Caco-2 (cell line): ENCODE measurements at regions of chr16 and their contacts with region 1.

Region 1: GRCh38 chr16:85554112-85554813 is 58.9 kb upstream of the GSE1 start:
- DNase-seq: peak; percentile 51 to 62
- H3K4me3 ChIP-seq: peak overlapping the region; percentile 76
- H3K4me3 Mint-ChIP-seq: peak overlapping the region; percentile 93
- H3K27ac Mint-ChIP-seq: peak overlapping the region; percentile 85
- H3K4me1 ChIP-seq: peaks cover 30% of the 10 kb centered on the region
- H3K4me1 Mint-ChIP-seq: peaks cover 26% of the 10 kb centered on the region
- H3K27me3 ChIP-seq: no peaks in the 10 kb centered on the region
- H3K27me3 Mint-ChIP-seq: no peaks in the 10 kb centered on the region
- CTCF ChIP-seq: no peak

Region 2: GRCh38 chr16:85330694-85331188 is 223.5 kb before region 1 on chr16:
- CTCF ChIA-PET with region 1: interaction called, 10 read pairs
- POLR2A ChIA-PET with region 1: no interaction called
- intact Hi-C with region 1: no loop called
- DNase-seq: peak; percentile 72 to 81
- H3K4me3 ChIP-seq: no peak overlapping the region
- H3K4me3 Mint-ChIP-seq: no peak overlapping the region
- H3K27ac Mint-ChIP-seq: peak overlapping the region; percentile 8
- H3K4me1 ChIP-seq: peaks cover 44% of the 10 kb centered on the region
- H3K4me1 Mint-ChIP-seq: peaks cover 39% of the 10 kb centered on the region
- H3K27me3 ChIP-seq: no peaks in the 10 kb centered on the region
- H3K27me3 Mint-ChIP-seq: no peaks in the 10 kb centered on the region
- CTCF ChIP-seq: peak; percentile 74 to 81

Region 3: GRCh38 chr16:85420501-85421337 is 133.5 kb before region 1 on chr16:
- CTCF ChIA-PET with region 1: interaction called, 29 read pairs
- POLR2A ChIA-PET with region 1: interaction called, 5 read pairs
- intact Hi-C with region 1: loop called (anchors 1 kb)
- DNase-seq: peak; percentile 39 to 67
- H3K4me3 ChIP-seq: no peak overlapping the region
- H3K4me3 Mint-ChIP-seq: no peak overlapping the region
- H3K27ac Mint-ChIP-seq: peak overlapping the region; percentile 49
- H3K4me1 ChIP-seq: peaks cover 39% of the 10 kb centered on the region
- H3K4me1 Mint-ChIP-seq: peaks cover 10% of the 10 kb centered on the region
- H3K27me3 ChIP-seq: no peaks in the 10 kb centered on the region
- H3K27me3 Mint-ChIP-seq: no peaks in the 10 kb centered on the region
- CTCF ChIP-seq: peak; percentile 75 to 98

Region 4: DNA sequence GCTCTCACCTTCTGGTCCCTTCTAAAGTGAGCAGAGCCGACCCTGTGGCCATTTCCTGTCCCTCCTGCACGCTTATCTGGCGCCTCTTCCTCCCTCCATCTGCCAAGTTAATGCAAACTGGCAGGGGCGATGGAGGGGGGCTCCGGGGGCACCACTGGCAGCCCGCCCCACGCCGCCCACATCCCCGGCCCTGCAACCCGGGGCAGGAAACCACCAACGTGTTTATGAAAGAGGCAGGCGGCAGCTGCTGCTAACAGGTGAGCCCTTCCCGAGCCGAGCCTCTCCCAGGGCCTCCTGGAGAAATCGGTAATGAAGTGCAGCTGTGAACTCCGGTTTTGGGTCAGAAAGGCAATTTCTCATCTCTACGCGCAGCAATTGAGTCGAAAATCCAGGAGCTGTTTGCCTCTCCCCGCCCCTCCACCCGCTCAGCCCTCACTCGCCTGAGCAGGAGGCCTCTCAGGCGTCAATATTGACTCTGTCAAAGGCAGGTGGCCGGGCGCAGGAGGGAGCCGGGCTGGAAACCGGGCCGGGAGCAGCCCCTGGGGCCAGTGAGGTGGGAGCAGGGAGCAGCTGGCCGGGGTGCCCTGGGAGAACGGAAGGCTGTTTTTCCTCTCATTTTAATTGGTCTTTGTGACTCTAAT is 105.6 kb before region 1 on chr16:
- CTCF ChIA-PET with region 1: interaction called, 13 read pairs
- POLR2A ChIA-PET with region 1: interaction called, 3 read pairs
- intact Hi-C with region 1: no loop called
- DNase-seq: peak; percentile 91 to 92
- H3K4me3 ChIP-seq: 0 out of 2 replicates have a peak overlapping the region, but pooled peaks have one; percentile 1
- H3K4me3 Mint-ChIP-seq: peak overlapping the region; percentile 57
- H3K27ac Mint-ChIP-seq: peak overlapping the region; percentile 77
- H3K4me1 ChIP-seq: peaks cover 45% of the 10 kb centered on the region
- H3K4me1 Mint-ChIP-seq: peaks cover 12% of the 10 kb centered on the region
- H3K27me3 ChIP-seq: no peaks in the 10 kb centered on the region
- H3K27me3 Mint-ChIP-seq: no peaks in the 10 kb centered on the region
- CTCF ChIP-seq: no peak

Region 5: DNA sequence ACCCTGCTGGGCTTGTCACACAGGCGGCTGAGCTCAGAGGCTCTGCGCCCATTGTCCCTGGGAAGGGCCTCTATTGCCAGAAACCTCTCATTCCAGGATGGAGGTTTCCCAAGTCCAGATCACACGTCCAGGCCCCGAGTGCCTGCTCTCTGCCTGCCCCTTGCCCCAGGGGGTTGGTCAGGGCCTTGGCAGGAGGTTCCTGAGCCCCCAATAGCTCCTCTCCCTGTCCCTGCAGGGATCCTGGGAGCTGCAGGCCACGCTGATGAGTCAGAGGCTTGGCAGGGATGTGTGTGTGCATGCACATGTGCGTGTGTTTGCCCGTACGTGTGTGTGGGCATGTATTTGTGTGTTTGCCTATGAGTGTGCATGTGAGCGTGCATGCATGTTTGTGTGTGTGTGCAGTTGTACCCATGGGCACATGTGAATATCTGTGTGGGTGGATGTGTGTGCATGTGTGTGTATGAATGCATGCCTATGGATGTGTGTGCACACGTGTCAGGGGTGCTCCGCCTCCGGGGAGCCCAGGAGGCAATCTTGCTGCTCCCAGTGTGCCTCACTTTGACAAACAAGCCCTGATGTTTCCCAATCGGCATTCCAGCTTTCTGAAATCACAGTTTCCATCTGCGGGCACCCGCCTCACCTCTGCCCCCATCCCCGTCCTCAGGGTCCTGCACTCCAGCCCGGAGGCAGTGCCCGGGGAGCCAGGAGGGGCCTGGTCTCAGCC is 39.5 kb before region 1 on chr16:
- CTCF ChIA-PET with region 1: interaction called, 22 read pairs
- POLR2A ChIA-PET with region 1: interaction called, 12 read pairs
- intact Hi-C with region 1: no loop called
- DNase-seq: peak; percentile 95 to 96
- H3K4me3 ChIP-seq: peak overlapping the region; percentile 18; the same call in 1 of the 2 replicates
- H3K4me3 Mint-ChIP-seq: peak overlapping the region; percentile 46
- H3K27ac Mint-ChIP-seq: peak overlapping the region; percentile 93
- H3K4me1 ChIP-seq: peaks cover 36% of the 10 kb centered on the region
- H3K4me1 Mint-ChIP-seq: peaks cover 33% of the 10 kb centered on the region
- H3K27me3 ChIP-seq: no peaks in the 10 kb centered on the region
- H3K27me3 Mint-ChIP-seq: no peaks in the 10 kb centered on the region
- CTCF ChIP-seq: peak; percentile 34 to 58

Region 6: DNA sequence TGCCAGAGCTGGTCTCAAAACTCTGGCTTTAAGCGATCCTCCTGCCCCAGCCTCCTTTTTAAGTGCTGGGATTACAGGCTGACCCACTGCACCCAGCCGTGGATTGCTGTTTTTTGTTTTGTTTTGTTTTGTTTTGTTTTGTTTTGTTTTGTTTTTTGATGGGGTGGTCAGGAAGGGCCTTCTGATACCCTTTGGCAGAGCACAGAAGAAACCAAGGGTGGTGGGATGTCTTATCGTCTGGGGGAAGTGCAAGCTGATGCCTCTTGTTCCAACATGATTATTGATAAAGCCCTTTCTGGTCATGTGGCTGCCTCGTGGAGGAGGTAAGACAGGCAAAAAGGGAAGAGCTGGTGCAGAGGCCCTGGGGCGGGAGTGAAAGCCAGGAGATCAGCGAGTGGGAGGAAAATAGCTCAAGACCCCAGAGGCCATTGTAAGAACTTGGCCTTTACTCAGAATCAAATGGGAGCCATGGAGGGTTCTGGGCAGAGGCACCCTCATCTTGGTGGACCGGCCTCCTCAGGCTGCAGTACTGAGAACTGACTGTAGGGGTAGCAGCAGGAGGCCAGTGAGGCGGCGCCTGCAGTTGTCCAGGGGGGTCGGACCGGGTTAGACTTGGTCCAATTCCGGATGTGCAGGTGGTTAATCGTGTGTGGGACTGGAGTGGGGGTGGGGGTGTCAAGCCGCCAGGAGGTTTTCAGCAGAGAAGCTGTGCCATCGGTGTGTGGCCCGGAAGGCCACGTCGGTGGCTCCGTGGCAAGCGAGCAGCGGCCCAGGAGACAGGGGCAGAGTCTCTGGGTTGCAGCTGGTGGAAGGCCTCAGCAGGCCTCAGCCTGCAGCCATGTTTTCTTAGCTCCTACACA is 25.5 kb before region 1 on chr16:
- CTCF ChIA-PET with region 1: interaction called, 12 read pairs
- POLR2A ChIA-PET with region 1: interaction called, 7 read pairs
- intact Hi-C with region 1: no loop called
- DNase-seq: peak in 1 of 2 experiments; percentile 67
- H3K4me3 ChIP-seq: no peak overlapping the region
- H3K4me3 Mint-ChIP-seq: no peak overlapping the region
- H3K27ac Mint-ChIP-seq: peak overlapping the region; percentile 13
- H3K4me1 ChIP-seq: peaks cover 70% of the 10 kb centered on the region
- H3K4me1 Mint-ChIP-seq: peaks cover 35% of the 10 kb centered on the region
- H3K27me3 ChIP-seq: no peaks in the 10 kb centered on the region
- H3K27me3 Mint-ChIP-seq: no peaks in the 10 kb centered on the region
- CTCF ChIP-seq: peak; percentile 58 to 61

Region 7: GRCh38 chr16:85610508-85611332 is 56.5 kb after region 1 on chr16:
- CTCF ChIA-PET with region 1: interaction called, 15 read pairs
- POLR2A ChIA-PET with region 1: interaction called, 20 read pairs
- intact Hi-C with region 1: loop called (anchors 1 kb)
- DNase-seq: peak; percentile 96 to 97
- H3K4me3 ChIP-seq: peak overlapping the region; percentile 95
- H3K4me3 Mint-ChIP-seq: peak overlapping the region; percentile 81
- H3K27ac Mint-ChIP-seq: peak overlapping the region; percentile 91
- H3K4me1 ChIP-seq: peaks cover 37% of the 10 kb centered on the region
- H3K4me1 Mint-ChIP-seq: peaks cover 25% of the 10 kb centered on the region
- H3K27me3 ChIP-seq: no peaks in the 10 kb centered on the region
- H3K27me3 Mint-ChIP-seq: no peaks in the 10 kb centered on the region
- CTCF ChIP-seq: peak; percentile 99

Region 8: GRCh38 chr16:85898521-85899442 is 344.5 kb after region 1 on chr16 and contains the start of gene IRF8:
- CTCF ChIA-PET with region 1: no interaction called
- POLR2A ChIA-PET with region 1: no interaction called
- intact Hi-C with region 1: no loop called
- DNase-seq: peak; percentile 85 to 91
- H3K4me3 ChIP-seq: peak within 1 kb of the TSS; percentile 78
- H3K4me3 Mint-ChIP-seq: peak within 1 kb of the TSS; percentile 84
- H3K27ac Mint-ChIP-seq: peak within 1 kb of the TSS; percentile 66
- H3K4me1 ChIP-seq: peaks cover 24% of the 10 kb centered on the region
- H3K4me1 Mint-ChIP-seq: peaks cover 36% of the 10 kb centered on the region
- H3K27me3 ChIP-seq: no peaks in the 10 kb centered on the region
- H3K27me3 Mint-ChIP-seq: no peaks in the 10 kb centered on the region
- CTCF ChIP-seq: no peak
- total RNA-seq, gene IRF8: 29.5 and 31.7 TPM in 2 replicates